ENCODE measurements at regions of chr6 and their contacts with region 1.

Region 1: GRCh38 chr6:90393232-90393884 is 96.7 kb upstream of the BACH2 start:
- DNase-seq: peak; percentile 69
- ATAC-seq: peak; percentile 62
- H3K4me3 ChIP-seq: no peak overlapping the region
- H3K27ac ChIP-seq: no peak overlapping the region
- H3K4me1 ChIP-seq: peaks cover 16% of the 10 kb centered on the region
- H3K27me3 ChIP-seq: no peaks in the 10 kb centered on the region
- CTCF ChIP-seq: peak; percentile 75

Region 2: DNA sequence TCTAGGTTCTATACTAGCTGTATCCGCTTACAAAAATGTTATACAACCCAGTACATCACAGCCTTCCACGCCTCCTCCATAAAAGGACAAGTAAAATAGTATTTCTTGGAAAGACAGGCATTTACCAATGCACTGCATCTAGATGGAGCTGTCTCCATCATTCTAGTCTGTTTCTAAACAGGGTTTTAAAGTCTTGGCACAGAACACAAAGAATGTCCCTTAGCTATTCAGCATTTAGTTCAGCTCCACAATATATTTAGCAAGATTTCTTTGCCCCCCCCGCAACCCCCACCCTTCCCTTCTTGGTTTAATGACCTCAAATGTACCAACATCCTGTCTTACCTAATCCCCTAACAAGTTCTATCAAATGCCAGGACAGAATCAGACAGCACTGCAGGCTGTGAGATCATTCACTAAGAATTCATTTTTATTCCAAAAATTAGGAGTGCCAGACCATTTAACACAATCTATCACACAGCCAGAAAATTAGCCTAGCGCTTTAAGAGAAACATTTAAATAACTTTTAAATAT is 295.3 kb before region 1 on chr6:
- CTCF ChIA-PET with region 1: no interaction called
- POLR2A ChIA-PET with region 1: no interaction called
- intact Hi-C with region 1: loop called (anchors 10 kb)
- DNase-seq: peak; percentile 58
- ATAC-seq: peak; percentile 96
- H3K4me3 ChIP-seq: no peak overlapping the region
- H3K27ac ChIP-seq: 0 out of 2 replicates have a peak overlapping the region, but pooled peaks have one; percentile 18
- H3K4me1 ChIP-seq: peaks cover 13% of the 10 kb centered on the region
- H3K27me3 ChIP-seq: no peaks in the 10 kb centered on the region
- CTCF ChIP-seq: peak; percentile 52

Region 3: GRCh38 chr6:90296346-90297114 is 96.8 kb before region 1 on chr6 and contains the start of gene BACH2:
- CTCF ChIA-PET with region 1: no interaction called
- POLR2A ChIA-PET with region 1: interaction called, 4 read pairs
- intact Hi-C with region 1: loop called (anchors 5 kb)
- DNase-seq: peak; percentile 84
- ATAC-seq: peak; percentile 70
- H3K4me3 ChIP-seq: peak within 1 kb of the TSS; percentile 90
- H3K27ac ChIP-seq: no peak within 1 kb of the TSS
- H3K4me1 ChIP-seq: 0 out of 2 replicates have a peak, but pooled peaks cover 4% of the 10 kb centered on the region
- H3K27me3 ChIP-seq: no peaks in the 10 kb centered on the region
- CTCF ChIP-seq: no peak
- total RNA-seq, gene BACH2: 4.8 and 7.0 TPM in 2 replicates